ENCODE measurements at regions of chr20 and their contacts with region 1.

Region 1: GRCh38 chr20:37990571-37991151 is 42.6 kb downstream of the TTI1 start:
- DNase-seq: peak; percentile 84
- ATAC-seq: peak; percentile 98
- H3K4me3 ChIP-seq: peak overlapping the region; percentile 13; the same call in 1 of the 2 replicates
- H3K27ac ChIP-seq: peak overlapping the region; percentile 63
- H3K4me1 ChIP-seq: peaks cover 33% of the 10 kb centered on the region
- H3K27me3 ChIP-seq: no peaks in the 10 kb centered on the region
- CTCF ChIP-seq: no peak
- EP300 ChIP-seq: peak; percentile 95 to 97
- POLR2A ChIP-seq: no peak
- RAD21 ChIP-seq: no peak

Region 2: GRCh38 chr20:37564388-37565133 is 426.1 kb before region 1 on chr20:
- CTCF ChIA-PET with region 1: interaction called, 26 read pairs
- POLR2A ChIA-PET with region 1: no interaction called
- RAD21 ChIA-PET with region 1: interaction called, 8 read pairs
- SMC1A ChIA-PET with region 1: interaction called, 9 read pairs
- in situ Hi-C with region 1: loop called (anchors 5 kb)
- intact Hi-C with region 1: loop called (anchors 2 kb)
- DNase-seq: no peak
- ATAC-seq: peak; percentile 86
- H3K4me3 ChIP-seq: no peak overlapping the region
- H3K27ac ChIP-seq: no peak overlapping the region
- H3K4me1 ChIP-seq: no peaks in the 10 kb centered on the region
- H3K27me3 ChIP-seq: peaks cover 2 to 12% of the 10 kb centered on the region in 2 experiments
- CTCF ChIP-seq: peak; percentile 87 to 95 (median 92)
- EP300 ChIP-seq: no peak
- POLR2A ChIP-seq: no peak
- RAD21 ChIP-seq: peak; percentile 96

Region 3: GRCh38 chr20:37755665-37756064 is 235.0 kb before region 1 on chr20:
- CTCF ChIA-PET with region 1: interaction called, 3 read pairs
- POLR2A ChIA-PET with region 1: no interaction called
- RAD21 ChIA-PET with region 1: no interaction called
- SMC1A ChIA-PET with region 1: no interaction called
- in situ Hi-C with region 1: no loop called
- intact Hi-C with region 1: loop called (anchors 10 kb)
- DNase-seq: no peak
- ATAC-seq: no peak
- H3K4me3 ChIP-seq: no peak overlapping the region
- H3K27ac ChIP-seq: no peak overlapping the region
- H3K4me1 ChIP-seq: no peaks in the 10 kb centered on the region
- H3K27me3 ChIP-seq: no peaks in the 10 kb centered on the region
- CTCF ChIP-seq: no peak
- EP300 ChIP-seq: no peak
- POLR2A ChIP-seq: no peak
- RAD21 ChIP-seq: no peak

Region 4: GRCh38 chr20:37901654-37902503 is 88.8 kb before region 1 on chr20:
- CTCF ChIA-PET with region 1: interaction called, 13 read pairs
- POLR2A ChIA-PET with region 1: no interaction called
- RAD21 ChIA-PET with region 1: interaction called, 10 read pairs
- SMC1A ChIA-PET with region 1: interaction called, 15 read pairs
- in situ Hi-C with region 1: loop called (anchors 5 kb)
- intact Hi-C with region 1: loop called (anchors 1 kb)
- DNase-seq: no peak
- ATAC-seq: peak; percentile 94
- H3K4me3 ChIP-seq: peak overlapping the region; percentile 61; the same call in 1 of the 2 replicates
- H3K27ac ChIP-seq: no peak overlapping the region
- H3K4me1 ChIP-seq: no peaks in the 10 kb centered on the region; the same call in 1 of the 2 replicates
- H3K27me3 ChIP-seq: peaks cover 1 to 4% of the 10 kb centered on the region in 2 experiments; a peak in 1 of 4 replicates
- CTCF ChIP-seq: peak; percentile 69 to 75 (median 72)
- EP300 ChIP-seq: no peak
- POLR2A ChIP-seq: no peak
- RAD21 ChIP-seq: peak; percentile 76

Region 5: GRCh38 chr20:37922016-37922415 is 68.6 kb before region 1 on chr20:
- CTCF ChIA-PET with region 1: interaction called, 6 read pairs
- POLR2A ChIA-PET with region 1: no interaction called
- RAD21 ChIA-PET with region 1: interaction called, 3 read pairs
- SMC1A ChIA-PET with region 1: interaction called, 12 read pairs
- in situ Hi-C with region 1: no loop called
- intact Hi-C with region 1: loop called (anchors 1 kb)
- DNase-seq: peak; percentile 85
- ATAC-seq: peak; percentile 89
- H3K4me3 ChIP-seq: peak overlapping the region; percentile 25; the same call in 1 of the 2 replicates
- H3K27ac ChIP-seq: peak overlapping the region; percentile 94
- H3K4me1 ChIP-seq: peaks cover 25% of the 10 kb centered on the region
- H3K27me3 ChIP-seq: no peaks in the 10 kb centered on the region
- CTCF ChIP-seq: no peak
- EP300 ChIP-seq: peak; percentile 29 to 62; a peak in 3 of 4 replicates
- POLR2A ChIP-seq: no peak
- RAD21 ChIP-seq: no peak

Measured in GM12878 (cell line).